Common myeloid progenitor, CD34-positive (primary cell): ENCODE measurements at regions of chr17 and their contacts with region 1.

Region 1: GRCh38 chr17:76506408-76507349 is 5.5 kb upstream of the RHBDF2 start:
- DNase-seq: peak; percentile 69 to 82 (median 76)
- H3K4me3 ChIP-seq: peak overlapping the region in 1 of 7 experiments; percentile 23
- H3K27ac ChIP-seq: no peak overlapping the region
- H3K4me1 ChIP-seq: peaks cover 0 to 17% (median 5%) of the 10 kb centered on the region in 4 experiments
- H3K27me3 ChIP-seq: no peaks in the 10 kb centered on the region

Region 2: GRCh38 chr17:76492989-76493501 is 13.6 kb before region 1 on chr17:
- CTCF ChIA-PET with region 1: interaction called, 34 read pairs
- POLR2A ChIA-PET with region 1: no interaction called
- DNase-seq: peak; percentile 62 to 90 (median 87)
- H3K4me3 ChIP-seq: peak overlapping the region in 5 of 7 experiments; percentile 24 to 63 (median 50)
- H3K27ac ChIP-seq: peak overlapping the region; percentile 50 to 73
- H3K4me1 ChIP-seq: peaks cover 0 to 58% (median 36%) of the 10 kb centered on the region in 4 experiments
- H3K27me3 ChIP-seq: no peaks in the 10 kb centered on the region

Region 3: DNA sequence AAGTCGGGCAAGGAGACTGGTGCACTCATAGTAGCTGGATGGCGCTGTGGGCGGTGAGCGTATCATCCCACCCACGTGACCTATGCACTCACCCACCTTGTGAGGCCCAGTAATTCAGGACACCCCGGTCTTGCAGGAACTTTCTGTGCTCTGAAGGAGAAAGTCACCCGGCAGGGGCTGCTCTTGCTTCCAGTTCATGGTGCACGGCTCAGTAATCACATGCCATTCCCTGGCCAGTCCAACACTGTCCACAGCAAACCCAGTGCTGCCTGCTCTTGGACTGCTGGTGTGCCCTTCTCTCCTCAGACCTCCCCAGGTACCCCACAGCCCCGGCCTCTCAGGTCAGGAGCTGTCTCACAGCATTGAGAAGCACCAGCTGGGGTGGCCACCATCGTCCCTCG is 11.0 kb after region 1 on chr17:
- CTCF ChIA-PET with region 1: interaction called, 14 read pairs
- POLR2A ChIA-PET with region 1: no interaction called
- DNase-seq: no peak
- H3K4me3 ChIP-seq: no peak overlapping the region
- H3K27ac ChIP-seq: no peak overlapping the region
- H3K4me1 ChIP-seq: peaks cover 0 to 23% (median 20%) of the 10 kb centered on the region in 4 experiments
- H3K27me3 ChIP-seq: no peaks in the 10 kb centered on the region